A673 (cell line): ENCODE measurements at regions of chr1 and their contacts with region 1.

Region 1: DNA sequence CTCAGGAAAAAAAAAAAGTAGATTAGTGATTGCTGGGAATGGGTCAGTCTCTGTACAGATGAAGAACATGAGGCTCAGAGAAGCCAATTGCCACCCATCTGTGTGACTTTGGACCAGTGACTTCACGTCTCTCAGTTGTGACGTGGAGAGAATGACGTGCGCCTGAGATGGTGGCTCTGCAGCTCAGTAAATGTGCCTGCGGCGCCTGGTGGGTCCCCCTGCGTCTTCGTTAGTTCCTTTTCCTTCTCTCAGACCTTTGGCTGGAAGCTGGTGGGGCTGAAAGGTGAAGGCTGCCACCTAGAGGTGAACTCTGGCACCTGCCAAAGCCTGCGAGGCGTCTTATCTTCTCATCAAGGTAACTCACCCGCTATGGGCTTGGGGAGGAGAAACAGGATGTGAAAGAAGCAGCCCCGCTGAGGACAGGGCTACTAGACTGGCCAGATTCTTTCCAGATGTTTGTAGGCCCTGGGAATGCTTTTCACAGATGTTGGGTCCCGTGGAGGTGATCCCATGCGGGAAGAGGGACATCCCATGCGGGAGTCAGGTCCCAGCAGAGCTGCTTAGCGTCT is 8.7 kb upstream of the E2F2 start:
- DNase-seq: peak; percentile 98
- H3K4me3 ChIP-seq: peak overlapping the region; percentile 13
- H3K27ac ChIP-seq: no peak overlapping the region
- H3K4me1 ChIP-seq: peaks cover 5% of the 10 kb centered on the region
- H3K27me3 ChIP-seq: no peaks in the 10 kb centered on the region
- CTCF ChIP-seq: peak; percentile 97

Region 2: DNA sequence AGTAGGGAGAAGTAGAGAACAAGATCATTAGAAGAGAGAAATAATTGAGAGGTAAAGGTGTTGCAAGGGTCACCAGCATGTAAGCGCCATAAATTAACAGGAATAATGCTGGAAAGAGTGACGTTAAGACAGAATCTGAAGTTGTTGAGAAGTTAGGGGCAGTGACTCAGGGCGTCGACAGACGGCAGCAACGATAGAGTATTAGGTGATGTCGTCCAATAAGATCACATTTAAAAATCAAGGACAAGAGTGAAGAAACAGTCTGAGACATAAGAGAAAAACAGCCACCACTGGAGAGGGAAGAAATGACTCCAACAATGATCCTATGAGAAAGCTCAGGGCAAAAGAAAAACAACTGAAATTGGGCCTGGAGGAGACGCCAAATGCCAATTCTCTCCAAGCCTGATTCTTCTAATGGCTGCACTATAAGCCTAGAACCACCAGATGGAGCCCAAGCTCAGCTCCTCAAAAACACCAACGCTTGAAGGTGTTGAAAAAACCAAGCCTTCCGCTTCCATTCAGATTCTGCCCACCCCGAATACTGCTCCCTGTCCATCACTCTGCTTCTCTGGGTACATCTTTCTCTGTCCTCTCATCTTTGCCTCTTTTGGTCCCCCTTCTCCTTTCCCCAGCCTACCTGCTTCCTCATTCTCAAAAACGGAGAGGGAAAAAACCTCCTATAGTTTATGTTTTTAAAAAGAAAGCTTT is 441.2 kb before region 1 on chr1:
- CTCF ChIA-PET with region 1: interaction called, 3 read pairs
- POLR2A ChIA-PET with region 1: no interaction called
- intact Hi-C with region 1: loop called (anchors 10 kb)
- DNase-seq: peak; percentile 87
- H3K4me3 ChIP-seq: no peak overlapping the region
- H3K27ac ChIP-seq: no peak overlapping the region
- H3K4me1 ChIP-seq: peaks cover 39% of the 10 kb centered on the region
- H3K27me3 ChIP-seq: no peaks in the 10 kb centered on the region
- CTCF ChIP-seq: peak; percentile 94

Region 3: GRCh38 chr1:23528250-23528978 is 11.4 kb before region 1 on chr1:
- CTCF ChIA-PET with region 1: interaction called, 10 read pairs
- POLR2A ChIA-PET with region 1: no interaction called
- intact Hi-C with region 1: no loop called
- DNase-seq: peak; percentile 87
- H3K4me3 ChIP-seq: peak overlapping the region; percentile 84
- H3K27ac ChIP-seq: peak overlapping the region; percentile 93
- H3K4me1 ChIP-seq: peaks cover 50% of the 10 kb centered on the region
- H3K27me3 ChIP-seq: no peaks in the 10 kb centered on the region
- CTCF ChIP-seq: no peak

Region 4: GRCh38 chr1:23591460-23592208 is 51.9 kb after region 1 on chr1:
- CTCF ChIA-PET with region 1: no interaction called
- POLR2A ChIA-PET with region 1: no interaction called
- intact Hi-C with region 1: no loop called
- DNase-seq: no peak
- H3K4me3 ChIP-seq: no peak overlapping the region
- H3K27ac ChIP-seq: no peak overlapping the region
- H3K4me1 ChIP-seq: peaks cover 6% of the 10 kb centered on the region
- H3K27me3 ChIP-seq: no peaks in the 10 kb centered on the region
- CTCF ChIP-seq: no peak

Region 5: DNA sequence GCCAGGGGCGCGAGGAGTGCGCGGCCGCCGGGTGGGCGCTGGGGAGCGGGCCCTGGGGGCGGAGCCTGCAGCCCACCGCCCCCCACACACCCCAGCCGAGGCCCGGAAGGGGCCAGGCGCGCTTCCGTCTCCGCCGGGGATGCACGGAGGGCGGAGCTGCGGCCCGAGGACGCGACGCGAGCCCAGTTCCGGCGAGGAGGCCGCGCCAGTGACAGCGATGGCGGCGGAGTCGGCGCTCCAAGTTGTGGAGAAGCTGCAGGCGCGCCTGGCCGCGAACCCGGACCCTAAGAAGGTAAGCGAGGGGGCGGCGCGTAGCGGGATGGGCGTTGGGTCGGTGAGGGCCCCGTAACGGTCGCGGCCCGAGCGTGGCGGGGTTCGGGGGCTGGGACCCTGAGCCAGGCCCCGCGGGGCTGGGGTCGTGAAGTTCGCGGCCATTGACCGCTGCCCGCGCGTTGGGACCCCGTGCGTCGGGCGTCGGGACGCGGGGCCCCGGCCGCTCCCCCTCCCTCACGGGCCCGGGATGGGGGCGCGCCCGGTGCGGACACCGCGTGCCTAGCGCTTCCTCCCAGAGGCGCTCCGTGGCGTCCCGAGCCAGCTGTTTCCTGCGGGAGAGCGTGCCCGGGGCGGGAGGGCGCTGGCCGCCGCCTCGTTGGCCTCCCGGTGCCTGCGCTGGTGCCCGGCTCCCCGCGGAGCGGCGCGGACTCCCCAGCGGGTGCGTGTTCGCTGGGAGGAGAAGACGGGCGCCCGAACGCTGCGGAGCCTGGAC is 203.7 kb after region 1 on chr1 and contains the start of gene ELOA:
- CTCF ChIA-PET with region 1: interaction called, 14 read pairs
- POLR2A ChIA-PET with region 1: no interaction called
- intact Hi-C with region 1: no loop called
- DNase-seq: peak; percentile 84
- H3K4me3 ChIP-seq: peak within 1 kb of the TSS; percentile 99
- H3K27ac ChIP-seq: peak within 1 kb of the TSS; percentile 89
- H3K4me1 ChIP-seq: peaks cover 12% of the 10 kb centered on the region
- H3K27me3 ChIP-seq: no peaks in the 10 kb centered on the region
- CTCF ChIP-seq: no peak
- total RNA-seq, gene ELOA: 66.3 and 69.8 TPM in 2 replicates